Activated CD8-positive, alpha-beta memory T cell treated with anti-CD3 and anti-CD28 coated beads, Interleukin-2, amount 10 ng/mL, durations not matched to agents 7 days and 5 days (primary cell): ENCODE measurements at regions of chr2 and their contacts with region 1.

Region 1: DNA sequence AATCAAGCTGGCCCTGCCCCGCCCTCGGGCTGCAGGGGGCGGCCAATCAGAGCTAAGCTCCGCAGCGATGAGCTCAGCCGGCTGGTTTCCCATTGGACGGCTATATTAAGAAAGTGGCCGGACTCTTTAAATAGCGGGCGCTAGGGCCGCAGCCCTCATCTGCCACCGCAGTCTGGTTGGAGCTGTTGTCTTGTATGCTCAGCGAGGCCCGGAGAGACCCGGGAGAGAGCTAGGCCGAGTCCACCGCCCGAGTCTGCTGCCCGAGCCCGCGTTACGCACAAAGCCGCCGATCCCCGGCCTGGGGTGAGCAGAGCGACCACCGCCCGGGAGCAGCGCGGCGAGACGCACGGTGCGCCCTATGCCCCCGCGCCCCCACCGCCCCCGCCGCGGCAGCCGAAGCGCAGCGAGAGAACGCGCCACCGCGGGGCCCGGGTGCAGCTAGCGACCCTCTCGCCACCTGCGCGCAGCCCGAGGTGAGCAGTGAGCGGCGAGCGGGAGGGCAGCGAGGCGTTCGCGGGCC is at the start of gene RHOB:
- DNase-seq: peak; percentile 94
- ATAC-seq: peak; percentile 97
- H3K4me3 Mint-ChIP-seq: peak within 1 kb of the TSS; percentile 73
- H3K27ac Mint-ChIP-seq: peak within 1 kb of the TSS; percentile 46
- H3K4me1 Mint-ChIP-seq: peaks cover 6% of the 10 kb centered on the region
- H3K27me3 Mint-ChIP-seq: peaks cover 50% of the 10 kb centered on the region
- total RNA-seq, gene RHOB: 9.1 to 36.4 TPM

Region 2: DNA sequence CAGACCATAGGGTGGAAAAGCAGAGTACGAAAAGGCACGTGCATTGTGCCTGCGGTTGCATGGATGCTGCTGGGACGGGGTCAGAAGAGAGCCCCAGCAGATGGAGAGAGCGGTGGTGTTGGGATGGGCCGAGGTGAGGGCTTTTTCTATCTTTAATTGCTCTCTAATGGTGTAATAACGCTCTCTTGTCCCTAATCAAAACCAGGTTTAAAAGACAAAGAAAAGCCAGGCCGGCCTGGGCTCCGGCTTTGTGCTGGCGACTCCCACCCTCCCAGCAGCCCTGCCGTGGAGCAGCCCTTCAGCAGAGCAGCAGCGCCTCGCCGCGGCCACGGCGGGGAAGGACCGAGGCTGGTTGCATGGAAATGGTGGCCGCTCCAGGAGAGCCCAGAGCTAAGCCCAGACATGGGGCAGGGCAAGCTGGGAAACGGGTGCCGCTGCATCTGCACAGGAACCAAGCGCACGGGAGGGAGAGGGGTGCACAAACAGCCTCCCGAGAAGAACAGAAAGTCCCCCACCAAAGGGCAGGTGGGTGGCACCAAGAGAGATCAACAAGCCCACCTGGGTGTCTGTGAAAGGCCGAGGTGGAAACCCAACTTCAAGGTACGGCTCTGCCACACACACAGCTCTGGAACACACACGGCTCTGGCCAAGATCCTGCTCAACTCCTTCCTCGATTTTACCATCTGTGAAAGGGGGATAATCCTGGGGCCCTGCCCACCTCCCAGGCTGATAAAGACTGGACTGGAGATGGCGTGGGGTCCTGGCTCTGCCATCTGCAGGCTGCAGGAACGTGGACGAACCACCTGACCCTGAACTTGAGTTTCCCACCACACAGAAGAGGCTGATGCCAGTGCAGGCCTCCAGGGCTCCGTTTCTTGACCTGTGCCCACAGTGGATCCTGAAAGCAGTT is 189.0 kb after region 1 on chr2:
- CTCF ChIA-PET with region 1: interaction called, 79 read pairs
- DNase-seq: peak; percentile 71
- ATAC-seq: peak; percentile 86
- H3K4me3 Mint-ChIP-seq: no peak overlapping the region
- H3K27ac Mint-ChIP-seq: no peak overlapping the region
- H3K4me1 Mint-ChIP-seq: peaks cover 8% of the 10 kb centered on the region
- H3K27me3 Mint-ChIP-seq: no peaks in the 10 kb centered on the region